Activated naive CD8-positive, alpha-beta T cell treated with anti-CD3 and anti-CD28 coated beads, Interleukin-2, amount 10 ng/mL, durations not matched to agents 7 days and 5 days (primary cell): ENCODE measurements at regions of chr22 and their contacts with region 1.

Region 1: DNA sequence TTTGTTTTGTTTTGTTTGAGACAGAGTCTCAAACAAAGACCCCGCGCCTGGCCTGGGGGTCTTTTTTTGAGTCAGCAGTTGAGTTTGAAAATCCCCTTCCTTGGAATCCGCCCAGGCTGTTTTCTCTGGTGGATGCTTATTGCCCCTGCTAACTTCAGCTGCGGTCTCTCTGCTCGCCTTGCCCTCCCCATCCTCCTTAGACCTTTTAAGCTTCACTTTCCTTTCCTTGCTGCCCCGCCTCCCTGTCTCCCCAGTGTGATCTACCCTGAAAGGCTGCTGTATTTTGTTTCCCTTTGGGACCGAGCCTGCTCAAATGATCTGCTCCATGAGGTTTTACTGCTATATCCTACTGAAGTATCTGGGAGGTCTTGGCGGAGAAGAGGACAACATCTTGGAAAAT is 2.5 kb downstream of the USP18 start:
- DNase-seq: peak; percentile 47
- ATAC-seq: peak; percentile 51
- H3K4me3 Mint-ChIP-seq: peak overlapping the region; percentile 82
- H3K27ac Mint-ChIP-seq: peak overlapping the region; percentile 87
- H3K4me1 Mint-ChIP-seq: peaks cover 54% of the 10 kb centered on the region
- H3K27me3 Mint-ChIP-seq: no peaks in the 10 kb centered on the region

Region 2: DNA sequence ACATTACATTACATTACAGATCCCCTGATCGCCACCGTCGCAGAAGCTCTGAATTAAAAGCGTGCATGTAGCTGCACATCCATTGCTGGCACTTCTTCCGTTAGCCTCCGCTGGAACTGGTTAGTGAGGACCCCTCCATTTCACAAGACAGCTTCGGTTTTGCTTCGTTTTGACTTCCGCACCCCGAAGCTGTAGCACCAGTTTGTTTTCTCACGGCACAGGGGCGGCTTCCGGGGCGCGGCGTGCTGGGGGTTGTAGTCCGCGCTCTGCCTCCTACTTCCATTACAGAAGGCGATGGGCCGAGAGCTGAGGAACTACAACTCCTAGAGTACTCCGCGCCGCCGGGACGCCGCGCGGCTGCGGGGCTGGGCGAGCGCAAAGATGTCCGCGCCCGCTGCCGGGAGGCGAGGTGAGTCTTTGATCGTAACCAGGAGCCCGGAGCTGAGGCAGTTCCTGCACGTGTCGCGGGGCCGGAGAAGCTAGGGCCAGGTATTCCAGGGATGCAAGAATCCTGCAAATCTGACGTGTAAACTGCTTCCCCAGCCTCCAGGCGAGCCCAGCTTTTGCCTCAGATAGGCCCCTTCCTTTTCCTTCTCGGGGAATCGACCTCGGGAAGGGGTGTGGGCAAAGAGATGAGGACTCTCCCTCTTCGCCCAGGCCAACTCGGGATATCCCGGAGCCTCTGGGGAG is 74.7 kb before region 1 on chr22 and contains the start of gene PEX26:
- POLR2A ChIA-PET with region 1: interaction called, 70 read pairs
- DNase-seq: peak; percentile 91
- ATAC-seq: peak; percentile 98
- H3K4me3 Mint-ChIP-seq: peak within 1 kb of the TSS; percentile 98
- H3K27ac Mint-ChIP-seq: peak within 1 kb of the TSS; percentile 99
- H3K4me1 Mint-ChIP-seq: peaks cover 44% of the 10 kb centered on the region
- H3K27me3 Mint-ChIP-seq: no peaks in the 10 kb centered on the region
- total RNA-seq, gene PEX26: 36.0 to 37.2 TPM

Region 3: GRCh38 chr22:18136563-18137320 is 15.8 kb before region 1 on chr22:
- POLR2A ChIA-PET with region 1: interaction called, 14 read pairs
- DNase-seq: no peak
- ATAC-seq: no peak
- H3K4me3 Mint-ChIP-seq: no peak overlapping the region
- H3K27ac Mint-ChIP-seq: no peak overlapping the region
- H3K4me1 Mint-ChIP-seq: peaks cover under 1% of the 10 kb centered on the region
- H3K27me3 Mint-ChIP-seq: no peaks in the 10 kb centered on the region